CD4-positive, alpha-beta memory T cell (primary cell): ENCODE measurements at regions of chr9 and their contacts with region 1.

Region 1: GRCh38 chr9:130682490-130683121 is 11.0 kb upstream of the EXOSC2 start:
- DNase-seq: peak in 4 of 5 donors; percentile 37 to 49 (median 48)
- H3K4me3 ChIP-seq: peak overlapping the region; percentile 81 to 93
- H3K4me3 Mint-ChIP-seq: peak overlapping the region; percentile 92 to 99 (median 94)
- H3K27ac ChIP-seq: peak overlapping the region; percentile 28
- H3K27ac Mint-ChIP-seq: peak overlapping the region; percentile 66 to 87 (median 81)
- H3K4me1 ChIP-seq: peaks cover 17% of the 10 kb centered on the region
- H3K4me1 Mint-ChIP-seq: peaks cover 5 to 18% (median 9%) of the 10 kb centered on the region in 4 donors
- H3K27me3 ChIP-seq: no peaks in the 10 kb centered on the region
- H3K27me3 Mint-ChIP-seq: peaks cover 0 to 9% of the 10 kb centered on the region in 2 donors

Region 2: GRCh38 chr9:130243015-130243734 is 439.4 kb before region 1 on chr9:
- CTCF ChIA-PET with region 1: no interaction called
- POLR2A ChIA-PET with region 1: no interaction called
- intact Hi-C with region 1: loop called (anchors 10 kb)
- DNase-seq: peak; percentile 74 to 81 (median 75)
- H3K4me3 ChIP-seq: peak overlapping the region in 1 of 2 donors; percentile 44
- H3K4me3 Mint-ChIP-seq: peak overlapping the region; percentile 72 to 87 (median 82)
- H3K27ac ChIP-seq: no peak overlapping the region
- H3K27ac Mint-ChIP-seq: peak overlapping the region; percentile 29 to 90 (median 83)
- H3K4me1 ChIP-seq: peaks cover 33% of the 10 kb centered on the region
- H3K4me1 Mint-ChIP-seq: peaks cover 18 to 50% (median 26%) of the 10 kb centered on the region in 4 donors
- H3K27me3 ChIP-seq: no peaks in the 10 kb centered on the region
- H3K27me3 Mint-ChIP-seq: no peaks in the 10 kb centered on the region

Region 3: DNA sequence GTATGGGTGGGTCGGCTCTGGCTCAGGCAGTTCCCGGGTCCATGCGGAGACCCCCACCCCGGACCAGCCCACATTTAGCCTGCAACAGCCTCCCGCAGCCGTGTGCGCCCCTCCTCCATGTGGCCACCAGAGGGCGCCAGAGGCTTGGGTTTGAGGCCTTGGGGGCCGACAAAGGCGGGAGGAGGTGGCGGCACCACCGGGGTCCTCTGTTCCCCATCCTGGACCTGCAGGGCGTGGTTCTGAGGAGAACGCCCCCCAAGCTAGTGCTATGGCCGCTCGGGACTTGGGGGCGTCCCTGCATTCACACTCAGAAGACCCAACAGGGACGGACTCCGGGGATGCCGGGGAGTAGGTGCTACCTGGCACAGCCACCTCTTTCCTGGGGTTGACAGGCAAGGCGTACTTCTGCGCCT is 221.4 kb before region 1 on chr9:
- CTCF ChIA-PET with region 1: interaction called, 171 read pairs
- POLR2A ChIA-PET with region 1: interaction called, 4 read pairs
- intact Hi-C with region 1: loop called (anchors 1 kb)
- DNase-seq: peak; percentile 53 to 68 (median 58)
- H3K4me3 ChIP-seq: no peak overlapping the region
- H3K4me3 Mint-ChIP-seq: no peak overlapping the region
- H3K27ac ChIP-seq: no peak overlapping the region
- H3K27ac Mint-ChIP-seq: no peak overlapping the region
- H3K4me1 ChIP-seq: no peaks in the 10 kb centered on the region
- H3K4me1 Mint-ChIP-seq: no peaks in the 10 kb centered on the region
- H3K27me3 ChIP-seq: no peaks in the 10 kb centered on the region
- H3K27me3 Mint-ChIP-seq: peaks cover 7 to 9% of the 10 kb centered on the region in 2 donors

Region 4: GRCh38 chr9:130693426-130694191 is 11.0 kb after region 1 on chr9 and contains the start of gene EXOSC2:
- CTCF ChIA-PET with region 1: interaction called, 24 read pairs
- POLR2A ChIA-PET with region 1: interaction called, 13 read pairs
- intact Hi-C with region 1: loop called (anchors 1 kb)
- DNase-seq: peak; percentile 88 to 99 (median 92)
- H3K4me3 ChIP-seq: peak within 1 kb of the TSS; percentile 91 to 93
- H3K4me3 Mint-ChIP-seq: peak within 1 kb of the TSS; percentile 92 to 99 (median 95)
- H3K27ac ChIP-seq: peak within 1 kb of the TSS; percentile 80
- H3K27ac Mint-ChIP-seq: peak within 1 kb of the TSS; percentile 83 to 98 (median 96)
- H3K4me1 ChIP-seq: peaks cover 40% of the 10 kb centered on the region
- H3K4me1 Mint-ChIP-seq: peaks cover 32 to 63% (median 44%) of the 10 kb centered on the region in 4 donors
- H3K27me3 ChIP-seq: no peaks in the 10 kb centered on the region
- H3K27me3 Mint-ChIP-seq: no peaks in the 10 kb centered on the region
- total RNA-seq, gene EXOSC2: 53.9 to 60.8 TPM

Region 5: GRCh38 chr9:130701056-130702022 is 18.7 kb after region 1 on chr9:
- CTCF ChIA-PET with region 1: interaction called, 15 read pairs
- POLR2A ChIA-PET with region 1: no interaction called
- intact Hi-C with region 1: no loop called
- DNase-seq: peak; percentile 57 to 68 (median 59)
- H3K4me3 ChIP-seq: no peak overlapping the region
- H3K4me3 Mint-ChIP-seq: no peak overlapping the region
- H3K27ac ChIP-seq: no peak overlapping the region
- H3K27ac Mint-ChIP-seq: no peak overlapping the region
- H3K4me1 ChIP-seq: peaks cover 3% of the 10 kb centered on the region
- H3K4me1 Mint-ChIP-seq: peaks cover 11 to 21% (median 14%) of the 10 kb centered on the region in 4 donors
- H3K27me3 ChIP-seq: no peaks in the 10 kb centered on the region
- H3K27me3 Mint-ChIP-seq: no peaks in the 10 kb centered on the region